ENCODE measurements at regions of chr10 and their contacts with region 1.

Region 1: DNA sequence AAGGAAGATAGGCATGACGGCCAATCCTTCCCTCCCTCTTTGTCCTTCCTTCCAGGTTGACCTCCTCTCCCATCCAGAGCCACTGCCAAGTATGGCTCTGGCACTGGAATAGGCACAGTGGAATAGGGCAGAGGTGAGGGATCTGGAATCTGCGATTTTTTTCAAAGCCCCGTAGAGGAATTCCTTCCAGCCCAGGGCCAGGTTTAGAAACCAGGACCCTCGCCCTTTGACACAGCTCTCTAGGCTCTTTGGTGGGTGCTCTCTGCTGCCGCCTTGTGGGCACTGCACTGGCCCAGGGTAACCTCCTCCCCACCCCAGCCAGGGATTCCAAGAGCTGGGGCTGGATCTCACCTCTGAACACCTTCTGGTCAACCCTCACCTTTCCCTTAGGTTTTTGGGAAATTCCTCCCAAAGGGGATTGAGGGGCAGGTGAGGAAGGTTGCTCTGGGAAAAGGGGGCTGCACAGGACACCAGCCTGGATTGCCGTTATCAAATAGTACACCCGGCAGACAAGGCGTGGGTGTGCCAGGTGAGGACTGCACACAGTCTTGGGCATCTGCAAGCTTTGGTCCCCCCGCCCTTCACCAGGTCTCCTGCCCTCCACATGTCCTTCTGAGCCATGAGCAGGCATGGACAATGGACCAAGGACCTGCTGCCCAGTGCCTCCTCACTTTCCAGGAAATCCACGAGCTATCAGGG is 22.8 kb downstream of the C10orf105 start:
- DNase-seq: no peak

Region 2: DNA sequence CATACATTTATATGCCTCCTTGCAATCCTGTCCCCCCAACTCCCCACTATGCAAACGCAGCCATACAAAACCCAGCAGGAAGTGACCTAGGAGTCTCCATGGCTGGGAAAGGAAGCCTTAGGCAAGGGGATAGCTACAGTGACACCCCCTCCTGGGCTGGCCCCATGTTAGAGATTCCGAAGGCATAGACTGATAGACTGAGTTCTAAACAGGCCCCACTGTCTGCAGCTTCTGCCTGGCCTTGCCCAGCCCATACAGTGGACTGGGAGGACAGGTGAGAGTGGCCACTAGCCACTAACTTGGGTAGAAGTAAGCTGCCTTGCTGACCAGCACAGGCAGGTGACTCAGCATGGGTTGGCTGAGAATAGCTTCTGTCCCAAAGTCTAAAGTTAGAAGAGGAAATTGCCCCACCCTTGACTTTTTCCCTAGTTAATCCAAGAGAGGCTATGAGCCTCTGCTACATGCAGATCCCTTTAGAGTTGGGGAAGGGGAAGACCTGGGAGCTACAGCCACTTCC is 83.5 kb before region 1 on chr10:
- intact Hi-C with region 1: loop called (anchors 5 kb)
- DNase-seq: no peak